Tibial artery (tissue), 4 donors: ENCODE measurements at regions of chr5 and their contacts with region 1.

Region 1: GRCh38 chr5:140401362-140402257 is at the start of gene ANKHD1:
- DNase-seq: peak; percentile 99 to 100
- H3K4me3 ChIP-seq: peak within 1 kb of the TSS; percentile 76 to 97
- H3K27ac ChIP-seq: peak within 1 kb of the TSS; percentile 96 to 97
- H3K4me1 ChIP-seq: peaks cover 0 to 48% (median 28%) of the 10 kb centered on the region in 4 donors
- H3K27me3 ChIP-seq: no peaks in the 10 kb centered on the region
- CTCF ChIP-seq: no peak

Region 2: DNA sequence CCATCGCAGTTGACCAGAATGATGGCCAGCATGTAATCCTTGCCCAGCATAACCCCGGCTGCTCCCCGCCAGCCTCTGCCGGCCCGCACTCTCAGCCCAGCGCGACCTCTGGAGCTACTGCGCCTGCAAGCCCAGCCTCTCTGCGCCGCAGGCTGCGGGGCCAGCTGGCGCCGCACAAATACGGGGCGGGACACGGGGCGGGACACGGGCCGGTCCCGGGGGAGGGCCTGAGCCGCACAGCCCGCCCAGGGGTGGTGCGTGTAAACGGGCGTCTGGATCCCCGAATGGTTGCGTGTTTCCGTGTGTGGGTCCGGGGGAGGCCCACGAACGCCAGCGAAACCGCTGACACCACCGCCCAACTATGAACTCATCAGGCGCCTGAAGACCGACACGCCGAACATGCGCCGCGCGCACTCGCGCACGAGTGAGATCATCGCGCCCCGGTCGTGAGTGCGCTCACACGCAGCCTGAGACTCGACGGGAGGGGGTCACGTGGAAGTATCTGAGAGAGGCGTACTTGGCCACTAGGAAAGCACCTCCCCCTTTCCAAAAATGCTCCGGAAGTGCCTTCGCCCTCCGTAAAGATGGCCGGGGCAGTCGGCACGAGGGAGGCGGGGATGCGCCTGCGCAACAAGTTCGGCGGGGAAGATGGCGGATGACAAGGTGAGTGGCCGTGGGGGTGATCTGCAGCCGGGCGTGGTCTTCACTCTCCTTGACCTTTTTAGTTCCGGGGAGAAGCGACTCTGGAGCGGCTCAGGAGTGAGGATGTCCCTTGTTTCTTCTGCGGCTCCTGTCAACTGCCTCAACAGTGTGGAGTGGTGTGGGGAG is 162.8 kb after region 1 on chr5 and contains the starts of genes APBB3 and SLC35A4:
- intact Hi-C with region 1: loop called (anchors 10 kb)
- DNase-seq: peak; percentile 98 to 99
- H3K4me3 ChIP-seq: peak within 1 kb of the TSS; percentile 67 to 77
- H3K27ac ChIP-seq: peak within 1 kb of the TSS; percentile 93 to 94
- H3K4me1 ChIP-seq: peaks cover 0 to 60% (median 40%) of the 10 kb centered on the region in 4 donors
- H3K27me3 ChIP-seq: no peaks in the 10 kb centered on the region
- CTCF ChIP-seq: peak in 1 of 2 experiments; percentile 16

Region 3: DNA sequence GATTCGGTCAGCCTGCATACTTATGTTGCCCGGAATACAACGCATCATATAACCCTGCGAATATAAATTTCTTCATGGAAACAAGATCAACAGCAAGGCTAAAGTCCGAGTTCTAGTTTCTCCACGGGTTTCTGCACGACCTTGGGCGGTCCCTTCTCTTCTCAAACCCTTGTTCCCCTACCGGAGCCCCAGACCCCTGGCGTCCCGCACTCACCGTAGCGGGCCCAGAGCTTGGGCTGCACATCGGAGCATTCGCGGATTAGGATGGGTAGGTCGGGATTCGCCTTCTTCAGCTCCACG is 245.4 kb after region 1 on chr5:
- intact Hi-C with region 1: loop called (anchors 5 kb)
- DNase-seq: no peak
- H3K4me3 ChIP-seq: peak overlapping the region; percentile 80 to 93
- H3K27ac ChIP-seq: peak overlapping the region; percentile 84 to 86
- H3K4me1 ChIP-seq: peaks cover 0 to 51% (median 25%) of the 10 kb centered on the region in 4 donors
- H3K27me3 ChIP-seq: no peaks in the 10 kb centered on the region
- CTCF ChIP-seq: no peak

Region 4: DNA sequence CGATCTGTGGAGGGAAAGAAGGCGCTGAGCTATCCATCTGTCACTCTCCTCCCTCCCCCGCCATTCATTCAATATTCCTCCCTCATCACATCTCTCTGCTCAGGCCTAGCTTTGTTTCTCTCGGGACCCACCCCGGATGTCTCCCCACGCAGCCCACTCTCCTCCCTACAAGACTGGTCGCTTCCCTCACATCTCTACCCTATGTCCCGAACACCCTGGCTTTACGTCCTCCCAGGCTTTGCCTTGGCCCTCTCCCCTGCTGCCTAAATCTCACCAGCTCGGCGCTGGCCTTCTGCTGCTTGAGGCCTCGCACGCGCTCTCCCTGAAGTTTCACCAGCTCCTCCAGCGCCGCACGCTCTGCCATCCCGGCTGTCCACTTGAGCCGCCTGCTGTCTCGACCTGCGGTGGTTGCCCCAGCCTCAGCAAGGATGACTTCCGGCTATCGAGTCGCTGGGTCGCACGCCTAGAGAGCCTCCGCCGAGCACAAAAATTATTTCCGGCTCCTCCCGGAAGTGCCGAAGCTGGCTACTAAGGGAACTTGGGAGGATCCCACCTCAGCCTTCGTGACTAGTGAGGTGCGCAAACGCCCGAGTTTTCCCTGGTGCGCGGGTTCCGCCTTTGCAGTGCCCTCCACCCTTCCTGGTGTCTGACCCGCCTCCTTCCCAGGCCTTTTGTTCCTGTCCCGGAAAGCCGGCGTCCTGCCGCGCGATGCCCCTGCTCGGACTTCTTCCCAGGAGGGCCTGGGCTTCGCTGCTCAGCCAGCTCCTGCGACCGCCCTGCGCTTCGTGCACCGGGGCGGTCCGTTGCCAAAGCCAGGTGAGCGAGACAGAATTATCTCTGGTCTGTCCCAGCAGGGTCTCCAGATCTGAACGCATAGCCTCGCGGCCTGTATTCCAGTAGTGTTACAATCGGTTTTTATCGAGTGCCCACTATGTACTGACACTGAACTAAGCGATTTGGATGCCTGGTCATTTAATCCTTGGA is 289.6 kb after region 1 on chr5 and contains the starts of genes HARS1 and HARS2:
- intact Hi-C with region 1: loop called (anchors 5 kb)
- DNase-seq: peak; percentile 89 to 95
- H3K4me3 ChIP-seq: peak within 1 kb of the TSS; percentile 88 to 95
- H3K27ac ChIP-seq: peak within 1 kb of the TSS; percentile 87 to 94
- H3K4me1 ChIP-seq: peaks cover 0 to 35% (median 25%) of the 10 kb centered on the region in 4 donors
- H3K27me3 ChIP-seq: no peaks in the 10 kb centered on the region
- CTCF ChIP-seq: no peak

Region 5: GRCh38 chr5:141512390-141512910 is 1110.8 kb after region 1 on chr5:
- intact Hi-C with region 1: loop called (anchors 10 kb)
- DNase-seq: peak; percentile 87 to 92
- H3K4me3 ChIP-seq: peak overlapping the region; percentile 66 to 71
- H3K27ac ChIP-seq: peak overlapping the region; percentile 91 to 95
- H3K4me1 ChIP-seq: peaks cover 0 to 74% (median 56%) of the 10 kb centered on the region in 4 donors
- H3K27me3 ChIP-seq: no peaks in the 10 kb centered on the region
- CTCF ChIP-seq: peak; percentile 77 to 87